ENCODE measurements at regions of chr11 and their contacts with region 1.

Region 1: DNA sequence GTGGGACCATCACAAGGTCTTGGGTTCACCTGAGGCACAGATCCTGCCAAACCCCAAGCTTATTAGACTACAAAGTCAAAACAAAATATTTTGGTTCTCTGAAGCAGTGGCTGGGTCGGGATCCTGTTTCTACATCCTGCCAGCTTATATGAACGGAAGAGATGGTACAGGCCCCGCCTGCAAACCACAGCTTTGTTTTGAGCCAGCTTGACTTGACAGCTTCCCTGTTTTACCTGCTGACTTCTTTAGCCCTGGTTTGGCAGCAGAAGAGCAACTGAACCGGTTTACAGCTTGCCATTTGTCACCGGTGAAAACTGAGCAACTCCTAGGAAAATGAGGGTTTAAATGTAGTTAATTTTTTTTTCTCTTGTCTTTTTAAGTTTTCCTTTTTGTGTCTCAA is 11.4 kb downstream of the PACS1 start:
- DNase-seq: peak; percentile 53 to 90 (median 77)
- ATAC-seq: peak; percentile 86 to 98
- H3K4me3 Mint-ChIP-seq: peak overlapping the region; percentile 75 to 94 (median 90)
- H3K27ac Mint-ChIP-seq: peak overlapping the region; percentile 93 to 100 (median 98)
- H3K4me1 Mint-ChIP-seq: peaks cover 46 to 97% (median 92%) of the 10 kb centered on the region in 4 donors
- H3K27me3 Mint-ChIP-seq: no peaks in the 10 kb centered on the region

Region 2: DNA sequence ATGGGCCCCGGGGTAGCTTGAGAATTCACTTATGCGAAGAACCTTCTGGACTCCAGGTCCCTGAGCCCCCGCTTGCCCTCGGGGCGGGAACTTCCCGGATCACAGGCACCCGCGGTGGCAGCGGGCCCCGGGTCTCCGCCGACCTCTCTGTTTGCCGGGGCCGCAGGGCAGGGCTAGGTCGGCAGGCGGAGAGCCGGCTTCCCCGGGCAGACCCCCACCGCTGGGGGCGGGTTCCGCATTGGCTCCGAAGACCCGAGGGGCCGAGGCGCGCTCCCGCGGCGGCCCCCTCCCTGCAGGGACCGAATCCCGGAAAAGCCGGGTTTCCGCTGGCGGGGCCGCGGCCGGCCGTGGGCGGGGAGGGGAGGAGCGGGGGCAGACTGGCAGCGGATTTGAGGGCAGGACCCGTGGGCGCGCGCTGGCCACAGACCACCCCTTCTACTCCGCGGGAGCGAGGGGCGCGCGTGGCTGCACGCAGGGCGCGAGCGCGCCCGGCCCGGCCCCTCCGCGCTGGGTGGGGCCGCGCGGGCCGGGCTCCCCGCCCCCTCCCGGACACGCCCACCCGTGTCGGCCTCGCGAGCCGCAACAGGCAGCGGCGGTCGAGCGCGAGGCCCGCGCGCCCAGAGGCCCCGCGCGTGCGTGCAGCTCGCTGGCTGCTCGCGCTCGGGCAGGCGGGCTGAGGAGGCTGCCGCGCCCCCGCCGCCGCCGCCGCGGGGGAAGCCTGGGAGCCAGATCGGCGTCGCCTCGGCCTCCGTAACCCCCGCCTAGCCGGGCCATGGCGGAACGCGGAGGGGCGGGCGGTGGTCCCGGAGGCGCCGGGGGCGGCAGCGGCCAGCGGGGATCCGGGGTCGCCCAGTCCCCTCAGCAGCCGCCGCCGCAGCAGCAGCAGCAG is 11.5 kb before region 1 on chr11 and contains the start of gene PACS1:
- POLR2A ChIA-PET with region 1: interaction called, 146 read pairs
- DNase-seq: peak; percentile 71 to 91 (median 81)
- ATAC-seq: peak; percentile 70 to 71
- H3K4me3 Mint-ChIP-seq: peak within 1 kb of the TSS; percentile 92 to 99 (median 97)
- H3K27ac Mint-ChIP-seq: peak within 1 kb of the TSS; percentile 91 to 99 (median 98)
- H3K4me1 Mint-ChIP-seq: peaks cover 35 to 74% (median 63%) of the 10 kb centered on the region in 4 donors
- H3K27me3 Mint-ChIP-seq: no peaks in the 10 kb centered on the region
- polyA plus RNA-seq, gene PACS1: 35.9 to 98.8 (median 49.9) TPM

Region 3: DNA sequence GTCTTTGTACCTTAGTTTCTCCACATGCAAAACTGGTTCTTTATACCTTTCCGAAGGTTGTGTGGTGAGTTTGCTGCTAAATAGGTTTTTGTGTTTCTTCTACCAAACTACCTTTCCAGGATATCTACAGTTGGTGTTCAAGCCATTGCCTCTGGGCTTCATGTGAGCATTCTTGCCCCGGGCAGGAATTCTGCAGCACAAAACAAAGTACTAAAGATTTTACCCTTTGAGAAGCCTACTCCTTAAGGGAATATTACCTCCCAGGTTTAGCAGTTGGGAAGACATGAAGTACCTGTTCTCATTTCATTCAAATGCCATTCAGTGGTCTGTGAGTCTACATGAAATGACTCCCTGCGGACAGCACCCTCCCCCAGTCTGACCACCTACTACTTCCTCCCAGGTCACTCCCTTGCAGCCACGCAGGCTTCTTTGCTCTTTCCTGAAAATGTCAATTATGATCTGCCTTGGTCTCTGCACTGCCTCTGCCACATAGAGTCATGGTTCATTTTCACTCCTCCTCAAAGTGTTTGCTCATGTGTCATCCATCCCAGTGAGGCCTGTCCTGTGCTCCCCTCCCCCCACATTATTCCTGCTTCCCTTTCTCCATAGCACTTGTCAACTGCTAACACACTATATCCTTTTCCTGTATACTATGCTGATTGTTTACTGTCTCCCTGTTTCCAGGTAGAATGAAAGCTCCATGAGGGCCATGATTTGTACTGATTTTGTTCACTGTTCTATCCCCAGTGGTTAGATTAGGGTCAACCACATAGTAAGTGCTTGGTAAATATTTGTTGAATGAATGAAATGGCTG is 25.5 kb after region 1 on chr11:
- POLR2A ChIA-PET with region 1: interaction called, 91 read pairs
- DNase-seq: no peak
- ATAC-seq: no peak
- H3K4me3 Mint-ChIP-seq: peak overlapping the region in 9 of 10 donors; percentile 15 to 70 (median 54)
- H3K27ac Mint-ChIP-seq: peak overlapping the region; percentile 37 to 91 (median 75)
- H3K4me1 Mint-ChIP-seq: peaks cover 44 to 88% (median 82%) of the 10 kb centered on the region in 4 donors
- H3K27me3 Mint-ChIP-seq: no peaks in the 10 kb centered on the region

Region 4: GRCh38 chr11:66126808-66127555 is 45.5 kb after region 1 on chr11:
- POLR2A ChIA-PET with region 1: interaction called, 16 read pairs
- DNase-seq: peak; percentile 23 to 75 (median 55)
- ATAC-seq: peak; percentile 92
- H3K4me3 Mint-ChIP-seq: peak overlapping the region; percentile 61 to 89 (median 81)
- H3K27ac Mint-ChIP-seq: peak overlapping the region; percentile 88 to 98 (median 96)
- H3K4me1 Mint-ChIP-seq: peaks cover 44 to 84% (median 83%) of the 10 kb centered on the region in 4 donors
- H3K27me3 Mint-ChIP-seq: no peaks in the 10 kb centered on the region